Calu3 (cell line): ENCODE measurements at regions of chr10 and their contacts with region 1.

Region 1: DNA sequence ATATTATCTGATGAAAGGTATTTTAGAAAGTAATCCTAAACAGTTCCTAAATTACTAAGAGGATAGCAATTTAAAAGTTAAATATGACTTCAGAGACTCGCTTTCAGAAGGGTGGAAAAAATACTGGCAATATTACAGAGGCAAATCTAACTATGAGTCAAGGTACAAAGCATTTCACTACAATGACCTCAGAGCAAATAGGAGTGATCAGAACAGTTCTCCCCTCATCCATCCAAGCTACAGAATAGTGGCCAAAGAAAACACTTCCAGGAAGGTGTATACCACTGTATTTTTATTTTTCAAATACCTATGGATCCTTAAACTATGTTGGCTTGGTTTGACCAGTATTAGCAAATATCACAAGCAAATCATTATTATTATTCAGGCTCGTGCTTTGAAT is 112.8 kb upstream of the ODAD2 start:
- DNase-seq: no peak
- H3K4me3 Mint-ChIP-seq: no peak overlapping the region
- H3K27ac Mint-ChIP-seq: no peak overlapping the region
- H3K4me1 Mint-ChIP-seq: peaks cover under 1% of the 10 kb centered on the region
- H3K27me3 Mint-ChIP-seq: no peaks in the 10 kb centered on the region
- CTCF ChIP-seq: no peak

Region 2: GRCh38 chr10:27998254-27999004 is 113.3 kb before region 1 on chr10:
- CTCF ChIA-PET with region 1: no interaction called
- intact Hi-C with region 1: loop called (anchors 10 kb)
- DNase-seq: peak; percentile 33
- H3K4me3 Mint-ChIP-seq: peak overlapping the region; percentile 97
- H3K27ac Mint-ChIP-seq: peak overlapping the region; percentile 70
- H3K4me1 Mint-ChIP-seq: peaks cover 9% of the 10 kb centered on the region
- H3K27me3 Mint-ChIP-seq: peaks cover 27% of the 10 kb centered on the region
- CTCF ChIP-seq: no peak